ENCODE measurements at regions of chr15 and their contacts with region 1.

Region 1: GRCh38 chr15:34628577-34629152 is 45.2 kb upstream of the GOLGA8B start:
- DNase-seq: peak; percentile 70
- H3K4me3 ChIP-seq: no peak overlapping the region
- H3K27ac ChIP-seq: peak overlapping the region; percentile 44
- H3K4me1 ChIP-seq: peaks cover 38% of the 10 kb centered on the region
- H3K27me3 ChIP-seq: no peaks in the 10 kb centered on the region
- CTCF ChIP-seq: no peak
- POLR2A ChIP-seq: peak; percentile 37

Region 2: GRCh38 chr15:34434627-34435305 is 193.9 kb before region 1 on chr15:
- CTCF ChIA-PET with region 1: no interaction called
- POLR2A ChIA-PET with region 1: no interaction called
- dilution Hi-C with region 1: no loop called
- intact Hi-C with region 1: no loop called
- DNase-seq: no peak
- H3K4me3 ChIP-seq: no peak overlapping the region
- H3K27ac ChIP-seq: no peak overlapping the region
- H3K4me1 ChIP-seq: peaks cover 7% of the 10 kb centered on the region
- H3K27me3 ChIP-seq: peaks cover 0 to under 1% of the 10 kb centered on the region in 2 experiments
- CTCF ChIP-seq: no peak
- POLR2A ChIP-seq: no peak

Region 3: GRCh38 chr15:34587717-34588674 is 40.7 kb before region 1 on chr15:
- CTCF ChIA-PET with region 1: no interaction called
- POLR2A ChIA-PET with region 1: no interaction called
- dilution Hi-C with region 1: no loop called
- intact Hi-C with region 1: no loop called
- DNase-seq: peak; percentile 74
- H3K4me3 ChIP-seq: peak overlapping the region in 1 of 3 experiments; percentile 58
- H3K27ac ChIP-seq: no peak overlapping the region
- H3K4me1 ChIP-seq: peaks cover 5% of the 10 kb centered on the region
- H3K27me3 ChIP-seq: no peaks in the 10 kb centered on the region
- CTCF ChIP-seq: peak; percentile 64 to 74
- POLR2A ChIP-seq: no peak

Region 4: DNA sequence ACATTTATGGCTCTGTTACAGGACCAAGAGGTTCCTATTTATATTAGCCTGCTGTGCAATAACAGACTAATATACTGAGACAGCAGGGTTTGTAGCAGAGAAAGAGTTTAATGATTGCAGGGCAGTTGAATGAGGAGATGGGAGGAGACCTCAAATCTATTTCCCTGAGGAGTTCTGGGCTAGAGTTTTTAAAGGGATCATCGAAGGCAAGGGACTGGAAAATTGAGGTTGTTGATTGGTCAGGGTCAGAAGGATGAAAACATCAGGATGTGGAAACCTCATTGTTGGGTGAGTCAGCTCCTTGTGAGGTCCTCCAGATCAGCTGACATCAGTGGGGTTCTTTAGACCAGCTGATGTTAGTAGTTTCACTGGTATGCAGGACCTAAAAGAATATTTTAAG is 15.4 kb after region 1 on chr15:
- CTCF ChIA-PET with region 1: no interaction called
- POLR2A ChIA-PET with region 1: no interaction called
- dilution Hi-C with region 1: no loop called
- intact Hi-C with region 1: no loop called
- DNase-seq: no peak
- H3K4me3 ChIP-seq: no peak overlapping the region
- H3K27ac ChIP-seq: no peak overlapping the region
- H3K4me1 ChIP-seq: no peaks in the 10 kb centered on the region
- H3K27me3 ChIP-seq: no peaks in the 10 kb centered on the region
- CTCF ChIP-seq: no peak
- POLR2A ChIP-seq: no peak

Region 5: DNA sequence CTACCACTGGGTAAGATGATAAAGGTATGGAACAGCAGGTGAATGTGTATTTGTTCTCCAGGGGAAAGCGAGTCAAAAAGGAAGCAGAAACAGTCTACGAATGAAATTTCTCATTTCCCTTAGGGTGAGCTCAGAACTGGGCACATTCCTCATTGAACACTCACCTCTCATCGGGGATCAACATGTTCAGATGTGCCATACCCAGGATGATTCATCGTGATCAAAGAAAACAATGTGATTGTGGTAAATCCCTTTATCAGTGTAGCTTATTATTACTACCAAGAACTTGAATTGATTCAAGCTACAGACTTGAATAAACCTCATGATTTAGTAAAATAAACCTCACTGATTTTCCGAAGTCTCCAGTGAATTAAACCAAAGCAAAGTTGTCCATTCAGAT is 54.0 kb after region 1 on chr15:
- CTCF ChIA-PET with region 1: no interaction called
- POLR2A ChIA-PET with region 1: no interaction called
- dilution Hi-C with region 1: no loop called
- intact Hi-C with region 1: loop called (anchors 5 kb)
- DNase-seq: peak; percentile 74
- H3K4me3 ChIP-seq: no peak overlapping the region
- H3K27ac ChIP-seq: peak overlapping the region; percentile 69
- H3K4me1 ChIP-seq: peaks cover 12% of the 10 kb centered on the region
- H3K27me3 ChIP-seq: no peaks in the 10 kb centered on the region
- CTCF ChIP-seq: no peak
- POLR2A ChIP-seq: no peak

Region 6: DNA sequence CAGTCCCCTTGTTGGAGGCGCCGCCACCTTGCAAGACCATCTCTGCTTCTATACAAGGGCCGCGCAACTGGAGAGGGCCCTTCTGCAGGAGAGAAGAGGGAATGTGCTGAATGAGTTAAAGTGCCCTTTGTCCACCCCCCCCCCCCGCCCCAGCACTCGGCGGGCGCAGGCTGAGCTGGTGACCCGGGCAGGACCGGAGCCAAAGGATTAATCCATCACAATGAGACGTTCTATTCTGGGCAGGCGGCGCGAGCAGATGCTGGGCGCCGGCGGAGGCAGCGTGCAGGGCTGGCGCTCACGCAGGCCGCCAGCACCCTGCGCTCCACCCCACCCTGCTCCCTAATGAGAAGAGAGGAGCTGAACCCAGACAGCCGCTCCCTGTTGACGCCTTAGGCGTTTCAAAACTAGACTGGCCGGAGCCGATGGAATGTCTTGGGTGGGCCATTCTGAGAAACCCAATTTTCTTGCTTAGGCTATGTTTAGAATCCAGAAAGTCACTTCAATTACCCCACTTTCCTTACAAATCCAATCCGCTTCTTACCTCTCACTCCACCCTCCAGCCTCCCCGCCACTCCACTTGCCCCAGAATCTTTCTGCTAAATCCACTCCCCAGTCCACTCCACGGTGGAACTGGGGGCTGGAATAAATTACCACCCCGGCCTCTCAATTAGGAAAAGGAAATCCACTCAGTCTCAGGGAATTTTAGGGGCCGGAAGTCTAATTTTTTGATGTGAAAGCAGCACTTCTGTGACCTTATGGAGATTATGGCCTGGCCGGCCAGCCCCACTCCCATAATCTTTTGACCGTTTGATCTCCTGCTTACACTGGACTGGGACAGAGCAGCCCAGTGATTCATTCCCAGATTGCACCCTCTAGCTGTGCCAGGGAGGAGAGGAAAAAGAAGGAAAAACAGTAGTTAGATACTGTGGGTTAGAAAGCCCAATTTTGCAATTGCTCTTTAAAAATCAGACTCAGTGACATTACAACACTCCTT is 93.4 kb after region 1 on chr15:
- CTCF ChIA-PET with region 1: no interaction called
- POLR2A ChIA-PET with region 1: no interaction called
- dilution Hi-C with region 1: no loop called
- intact Hi-C with region 1: loop called (anchors 2 kb)
- DNase-seq: peak; percentile 58
- H3K4me3 ChIP-seq: peak overlapping the region in 2 of 3 experiments; percentile 32 to 45
- H3K27ac ChIP-seq: peak overlapping the region; percentile 55
- H3K4me1 ChIP-seq: peaks cover 11% of the 10 kb centered on the region
- H3K27me3 ChIP-seq: no peaks in the 10 kb centered on the region
- CTCF ChIP-seq: peak in 1 of 2 donors; percentile 18
- POLR2A ChIP-seq: no peak

Region 7: GRCh38 chr15:34810455-34811146 is 181.9 kb after region 1 on chr15:
- CTCF ChIA-PET with region 1: no interaction called
- POLR2A ChIA-PET with region 1: no interaction called
- dilution Hi-C with region 1: no loop called
- intact Hi-C with region 1: loop called (anchors 5 kb)
- DNase-seq: peak; percentile 11
- H3K4me3 ChIP-seq: no peak overlapping the region
- H3K27ac ChIP-seq: no peak overlapping the region
- H3K4me1 ChIP-seq: no peaks in the 10 kb centered on the region
- H3K27me3 ChIP-seq: peaks cover 2% of the 10 kb centered on the region in 2 experiments
- CTCF ChIP-seq: no peak
- POLR2A ChIP-seq: no peak